Activated CD8-positive, alpha-beta T cell treated with anti-CD3 and anti-CD28 coated beads, Interleukin-2, amount 10 ng/mL, durations not matched to agents 7 days and 5 days (primary cell): ENCODE measurements at regions of chr2 and their contacts with region 1.

Region 1: GRCh38 chr2:197705121-197705911 is at the start of gene MARS2:
- DNase-seq: peak; percentile 94
- ATAC-seq: peak; percentile 91
- H3K4me3 Mint-ChIP-seq: peak within 1 kb of the TSS; percentile 89
- H3K27ac Mint-ChIP-seq: peak within 1 kb of the TSS; percentile 88
- H3K4me1 Mint-ChIP-seq: peaks cover 42% of the 10 kb centered on the region
- H3K27me3 Mint-ChIP-seq: no peaks in the 10 kb centered on the region
- total RNA-seq, gene MARS2: 15.0 to 15.6 TPM

Region 2: GRCh38 chr2:197515739-197516392 is 189.4 kb before region 1 on chr2 and contains the start of gene MOB4:
- CTCF ChIA-PET with region 1: no interaction called
- POLR2A ChIA-PET with region 1: interaction called, 12 read pairs
- DNase-seq: peak; percentile 95
- ATAC-seq: peak; percentile 92
- H3K4me3 Mint-ChIP-seq: peak within 1 kb of the TSS; percentile 91
- H3K27ac Mint-ChIP-seq: peak within 1 kb of the TSS; percentile 91
- H3K4me1 Mint-ChIP-seq: peaks cover 34% of the 10 kb centered on the region
- H3K27me3 Mint-ChIP-seq: no peaks in the 10 kb centered on the region
- total RNA-seq, gene MOB4: 16.5 to 21.3 TPM

Region 3: DNA sequence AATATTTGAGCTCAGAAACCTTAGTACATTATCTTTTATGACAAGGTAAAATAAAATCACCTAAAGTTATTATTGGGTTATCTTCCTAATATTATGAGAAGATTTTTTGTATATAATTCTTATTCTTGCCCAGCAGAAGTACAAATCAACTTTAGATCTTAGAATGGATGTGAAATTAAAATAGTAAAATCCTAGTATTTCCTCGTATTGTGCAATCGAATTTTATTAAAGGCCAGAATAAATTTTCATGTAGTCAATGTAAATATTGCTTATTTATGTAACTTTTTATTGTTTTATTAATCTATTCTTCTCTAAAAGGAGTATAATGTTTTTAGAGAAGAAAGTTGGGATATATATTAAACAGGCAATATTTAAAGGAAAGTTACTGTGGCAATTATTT is 12.5 kb after region 1 on chr2:
- CTCF ChIA-PET with region 1: interaction called, 24 read pairs
- POLR2A ChIA-PET with region 1: interaction called, 5 read pairs
- DNase-seq: no peak
- ATAC-seq: no peak
- H3K4me3 Mint-ChIP-seq: no peak overlapping the region
- H3K27ac Mint-ChIP-seq: no peak overlapping the region
- H3K4me1 Mint-ChIP-seq: peaks cover 6% of the 10 kb centered on the region
- H3K27me3 Mint-ChIP-seq: no peaks in the 10 kb centered on the region

Region 4: DNA sequence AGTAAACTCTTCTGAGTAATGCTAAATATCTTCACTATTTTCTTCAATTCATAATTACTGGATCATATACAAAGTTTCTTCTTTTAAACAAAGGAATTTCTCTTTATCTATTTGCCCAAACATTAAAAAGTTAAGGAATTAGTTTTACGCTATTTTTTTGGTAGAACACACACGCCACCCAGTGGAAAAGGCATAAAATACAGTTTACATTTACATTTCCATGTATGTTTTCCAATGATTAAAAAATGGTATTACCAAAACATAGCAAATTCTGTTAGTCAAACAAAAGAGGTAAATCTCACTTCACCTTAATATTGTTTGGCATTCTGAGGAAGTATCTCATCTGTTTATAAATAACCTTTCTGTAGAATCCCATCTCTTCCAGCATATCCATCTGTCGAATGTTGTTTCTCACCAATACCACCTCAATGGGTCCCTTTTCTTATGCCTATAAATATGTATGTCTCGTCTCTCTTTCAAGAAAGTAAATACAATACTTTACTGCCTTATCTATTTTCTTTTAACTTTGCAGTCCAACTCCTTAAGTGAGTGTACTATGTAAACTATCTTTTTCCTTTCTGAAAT is 72.6 kb after region 1 on chr2:
- CTCF ChIA-PET with region 1: interaction called, 21 read pairs
- POLR2A ChIA-PET with region 1: interaction called, 4 read pairs
- DNase-seq: peak; percentile 39
- ATAC-seq: no peak
- H3K4me3 Mint-ChIP-seq: no peak overlapping the region
- H3K27ac Mint-ChIP-seq: no peak overlapping the region
- H3K4me1 Mint-ChIP-seq: peaks cover 2% of the 10 kb centered on the region
- H3K27me3 Mint-ChIP-seq: peaks cover 20% of the 10 kb centered on the region